HEK293 (cell line): ENCODE measurements at regions of chr1 and their contacts with region 1.

Region 1: GRCh38 chr1:111507411-111508201 is 4.2 kb upstream of the ADORA3 start:
- H3K4me3 ChIP-seq: no peak overlapping the region
- H3K27ac ChIP-seq: peak overlapping the region; percentile 11; the same call in 1 of the 2 replicates
- H3K4me1 ChIP-seq: no peaks in the 10 kb centered on the region
- CTCF ChIP-seq: no peak

Region 2: GRCh38 chr1:111392460-111392945 is 115.1 kb before region 1 on chr1:
- CTCF ChIA-PET with region 1: no interaction called
- POLR2A ChIA-PET with region 1: no interaction called
- H3K4me3 ChIP-seq: no peak overlapping the region
- H3K27ac ChIP-seq: no peak overlapping the region
- H3K4me1 ChIP-seq: no peaks in the 10 kb centered on the region
- CTCF ChIP-seq: no peak

Region 3: GRCh38 chr1:111471012-111471411 is 36.6 kb before region 1 on chr1:
- CTCF ChIA-PET with region 1: no interaction called
- POLR2A ChIA-PET with region 1: no interaction called
- H3K4me3 ChIP-seq: no peak overlapping the region
- H3K27ac ChIP-seq: no peak overlapping the region
- H3K4me1 ChIP-seq: no peaks in the 10 kb centered on the region
- CTCF ChIP-seq: no peak

Region 4: DNA sequence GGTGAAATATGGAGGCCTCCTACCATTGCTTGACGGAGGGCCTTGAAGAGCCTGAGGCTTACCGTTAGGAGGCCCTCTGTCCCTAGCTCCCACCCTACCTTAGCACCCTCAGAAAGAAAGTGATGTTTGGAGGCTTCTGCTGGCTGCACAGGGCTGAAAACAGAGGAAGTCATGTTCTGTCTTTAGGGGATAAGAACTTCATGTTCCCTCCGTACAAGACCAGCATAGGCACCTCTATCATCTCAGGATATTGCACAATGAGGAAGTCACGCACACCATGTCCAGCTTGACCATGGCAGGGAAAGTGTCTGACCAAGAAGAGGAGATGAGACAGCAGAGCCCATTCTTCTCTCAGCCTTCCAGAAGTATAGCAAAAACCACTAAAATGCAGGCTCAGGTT is 18.0 kb before region 1 on chr1:
- CTCF ChIA-PET with region 1: interaction called, 15 read pairs
- POLR2A ChIA-PET with region 1: no interaction called
- H3K4me3 ChIP-seq: no peak overlapping the region
- H3K27ac ChIP-seq: no peak overlapping the region
- H3K4me1 ChIP-seq: no peaks in the 10 kb centered on the region
- CTCF ChIP-seq: no peak

Region 5: DNA sequence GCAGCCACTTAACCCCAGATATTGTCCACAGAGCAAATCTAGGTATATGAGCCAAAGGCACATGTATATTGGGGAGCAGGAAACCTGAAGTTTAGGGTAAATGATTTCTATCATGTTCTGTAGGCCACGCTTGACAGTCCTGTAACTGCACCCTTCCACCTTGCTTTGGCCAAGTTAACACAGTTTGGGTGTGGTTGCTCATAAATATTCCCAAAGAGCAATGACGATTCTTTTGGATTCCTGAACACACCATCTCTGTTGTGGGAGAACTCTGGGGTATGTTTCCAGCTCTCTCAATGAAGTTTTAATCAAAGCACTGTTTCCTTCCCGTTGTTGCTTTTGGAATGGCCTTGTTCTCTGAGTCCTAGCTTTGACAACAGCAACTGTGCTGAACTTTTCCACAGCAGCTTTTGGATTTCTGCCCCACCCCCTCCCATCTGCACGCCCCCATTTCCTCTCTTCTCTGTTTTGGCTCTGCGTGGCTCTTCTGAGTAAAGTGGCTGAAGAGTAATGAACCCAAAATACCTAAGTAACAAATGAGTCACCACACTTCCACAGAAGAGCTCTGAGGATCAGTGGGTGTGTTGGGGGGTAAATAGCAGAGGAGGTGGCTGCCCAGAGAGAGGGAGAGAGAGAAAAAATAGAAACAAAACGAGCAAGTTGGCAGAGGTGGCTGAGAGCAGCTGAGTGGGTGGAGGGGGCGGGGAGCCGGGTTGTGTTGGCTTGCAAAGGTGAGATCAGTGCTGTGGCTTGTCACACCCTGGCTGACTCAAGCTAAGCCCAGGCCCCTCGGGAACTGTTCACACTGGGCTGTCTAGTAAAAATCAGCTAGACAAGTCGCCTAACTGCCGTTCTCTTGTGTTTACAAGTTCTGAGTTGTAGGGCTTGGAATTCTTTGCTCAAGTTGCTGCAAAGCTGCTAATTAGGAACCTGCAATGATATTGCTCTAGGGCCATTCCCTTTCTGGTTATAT is 85.1 kb after region 1 on chr1:
- CTCF ChIA-PET with region 1: interaction called, 11 read pairs
- POLR2A ChIA-PET with region 1: no interaction called
- H3K4me3 ChIP-seq: peak overlapping the region; percentile 6; the same call in 1 of the 2 replicates
- H3K27ac ChIP-seq: peak overlapping the region; percentile 61
- H3K4me1 ChIP-seq: peaks cover 12% of the 10 kb centered on the region
- CTCF ChIP-seq: no peak

Region 6: GRCh38 chr1:111658622-111659021 is 151.0 kb after region 1 on chr1:
- CTCF ChIA-PET with region 1: interaction called, 10 read pairs
- POLR2A ChIA-PET with region 1: no interaction called
- H3K4me3 ChIP-seq: no peak overlapping the region
- H3K27ac ChIP-seq: no peak overlapping the region
- H3K4me1 ChIP-seq: peaks cover 8% of the 10 kb centered on the region; the same call in 1 of the 2 replicates
- CTCF ChIP-seq: no peak

Region 7: DNA sequence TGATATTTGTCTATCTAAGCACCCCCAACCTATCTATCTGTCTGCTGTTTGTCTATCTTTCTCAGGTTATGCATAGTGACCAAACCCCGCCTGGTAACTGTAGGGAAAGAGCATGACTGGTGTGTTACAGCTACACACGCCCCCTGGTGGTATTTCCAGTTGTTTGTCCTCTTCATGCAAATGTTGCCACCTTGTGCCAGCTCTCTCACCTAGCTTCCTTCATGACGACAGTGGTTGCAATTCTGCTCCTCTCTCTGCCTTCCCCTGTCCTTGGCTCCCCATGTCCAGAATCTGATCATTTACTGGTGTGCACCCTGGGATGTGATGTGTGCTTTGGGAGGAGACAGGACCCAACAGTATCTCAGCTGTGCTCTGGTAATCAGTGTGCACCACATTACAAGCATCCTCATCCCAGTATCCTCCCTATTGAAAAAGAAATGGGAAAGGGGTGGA is 239.7 kb after region 1 on chr1:
- CTCF ChIA-PET with region 1: interaction called, 16 read pairs
- POLR2A ChIA-PET with region 1: no interaction called
- H3K4me3 ChIP-seq: no peak overlapping the region
- H3K27ac ChIP-seq: no peak overlapping the region
- H3K4me1 ChIP-seq: no peaks in the 10 kb centered on the region
- CTCF ChIP-seq: peak; percentile 77

Region 8: GRCh38 chr1:111769517-111770146 is 262.0 kb after region 1 on chr1:
- CTCF ChIA-PET with region 1: interaction called, 48 read pairs
- POLR2A ChIA-PET with region 1: interaction called, 3 read pairs
- H3K4me3 ChIP-seq: no peak overlapping the region
- H3K27ac ChIP-seq: no peak overlapping the region
- H3K4me1 ChIP-seq: no peaks in the 10 kb centered on the region
- CTCF ChIP-seq: peak; percentile 54